ENCODE measurements at regions of chr1 and their contacts with region 1.

Region 1: DNA sequence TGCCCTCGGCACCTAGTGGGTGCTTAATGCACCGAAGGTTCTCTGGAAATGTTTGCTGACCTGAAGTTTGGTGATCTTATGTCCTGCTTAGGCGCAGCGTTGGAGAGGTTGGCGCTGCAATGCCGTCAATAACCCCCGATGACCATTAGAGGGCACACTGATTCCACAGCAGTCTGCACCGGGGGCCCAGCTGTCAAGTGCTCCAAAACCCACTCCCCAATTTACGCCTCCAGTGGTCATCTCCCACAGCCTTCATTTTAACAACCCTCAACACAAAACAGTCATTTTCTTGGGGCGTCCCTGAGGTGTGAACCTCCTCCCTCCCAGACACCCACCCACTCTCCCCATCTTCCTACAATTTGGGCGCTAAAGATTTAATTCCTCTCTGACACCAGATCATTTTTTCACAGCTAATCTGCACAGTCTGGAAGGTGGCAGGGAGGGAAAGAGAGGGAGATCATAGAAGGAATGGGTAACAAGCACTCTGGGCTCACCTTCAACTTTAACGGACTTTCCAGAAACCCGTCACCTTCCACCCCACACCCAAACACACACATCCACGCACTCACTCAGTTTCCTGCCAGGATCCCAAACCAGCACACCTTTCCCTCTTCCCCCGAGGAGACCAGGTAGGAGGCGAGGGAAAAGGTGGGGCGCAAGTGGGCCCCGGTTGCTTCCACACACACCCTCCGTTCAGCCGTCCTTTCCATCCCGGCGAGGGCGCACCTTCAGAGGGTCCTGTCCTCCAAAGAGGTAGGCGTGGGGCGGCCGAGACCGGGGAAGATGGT is 576 bp upstream of the NPR1 start:
- DNase-seq: no peak
- ATAC-seq: peak; percentile 77
- H3K4me3 ChIP-seq: peak overlapping the region; percentile 67
- H3K27ac ChIP-seq: peak overlapping the region; percentile 74
- H3K4me1 ChIP-seq: peaks cover 14% of the 10 kb centered on the region
- H3K27me3 ChIP-seq: peaks cover 24% of the 10 kb centered on the region
- CTCF ChIP-seq: peak; percentile 90

Region 2: GRCh38 chr1:153749408-153750005 is 71.6 kb after region 1 on chr1:
- intact Hi-C with region 1: loop called (anchors 5 kb)
- DNase-seq: peak; percentile 91
- ATAC-seq: peak; percentile 96
- H3K4me3 ChIP-seq: no peak overlapping the region
- H3K27ac ChIP-seq: peak overlapping the region; percentile 85
- H3K4me1 ChIP-seq: peaks cover 39% of the 10 kb centered on the region
- H3K27me3 ChIP-seq: no peaks in the 10 kb centered on the region
- CTCF ChIP-seq: peak; percentile 96

Region 3: DNA sequence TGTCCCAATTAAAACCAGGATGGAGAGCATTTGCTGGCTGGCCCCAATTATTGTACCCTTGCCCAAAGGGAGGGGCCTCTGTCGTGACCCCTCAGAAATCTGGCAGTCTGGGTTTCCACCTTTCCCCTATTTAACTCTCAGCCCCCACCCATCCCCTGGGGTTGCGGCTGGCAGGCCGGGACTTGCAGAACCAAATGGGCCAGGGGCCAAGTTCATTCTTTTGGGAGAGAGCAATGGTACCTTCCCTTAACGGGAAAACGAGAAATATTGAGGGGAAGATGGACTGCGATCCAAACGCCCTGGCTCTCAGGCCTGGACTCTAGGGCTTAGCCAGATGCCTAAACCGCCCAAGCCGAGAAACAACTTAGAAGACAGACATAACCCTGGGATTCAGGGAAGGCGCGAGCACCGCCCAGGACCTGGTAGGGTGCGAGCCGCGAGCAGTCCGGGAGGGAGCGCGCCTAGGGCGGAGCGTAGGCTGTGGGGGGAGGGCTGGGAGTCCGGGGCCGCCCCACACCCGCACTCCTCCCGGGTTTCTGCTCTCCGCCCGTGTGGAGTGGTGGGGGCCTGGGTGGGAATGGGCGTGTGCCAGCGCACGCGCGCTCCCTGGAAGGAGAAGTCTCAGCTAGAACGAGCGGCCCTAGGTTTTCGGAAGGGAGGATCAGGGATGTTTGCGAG is 97.0 kb after region 1 on chr1 and contains the start of gene SLC27A3:
- intact Hi-C with region 1: loop called (anchors 5 kb)
- DNase-seq: peak; percentile 93
- ATAC-seq: peak; percentile 82
- H3K4me3 ChIP-seq: peak within 1 kb of the TSS; percentile 92
- H3K27ac ChIP-seq: peak within 1 kb of the TSS; percentile 93
- H3K4me1 ChIP-seq: peaks cover 70% of the 10 kb centered on the region
- H3K27me3 ChIP-seq: no peaks in the 10 kb centered on the region
- CTCF ChIP-seq: no peak
- total RNA-seq, gene SLC27A3: 105 TPM

Region 4: GRCh38 chr1:153946622-153947241 is 268.8 kb after region 1 on chr1 and contains the start of gene DENND4B:
- intact Hi-C with region 1: no loop called
- DNase-seq: peak; percentile 94
- ATAC-seq: peak; percentile 88
- H3K4me3 ChIP-seq: peak within 1 kb of the TSS; percentile 78
- H3K27ac ChIP-seq: peak within 1 kb of the TSS; percentile 95
- H3K4me1 ChIP-seq: peaks cover 23% of the 10 kb centered on the region
- H3K27me3 ChIP-seq: no peaks in the 10 kb centered on the region
- CTCF ChIP-seq: peak; percentile 94
- total RNA-seq, gene DENND4B: 83.7 TPM

Region 5: DNA sequence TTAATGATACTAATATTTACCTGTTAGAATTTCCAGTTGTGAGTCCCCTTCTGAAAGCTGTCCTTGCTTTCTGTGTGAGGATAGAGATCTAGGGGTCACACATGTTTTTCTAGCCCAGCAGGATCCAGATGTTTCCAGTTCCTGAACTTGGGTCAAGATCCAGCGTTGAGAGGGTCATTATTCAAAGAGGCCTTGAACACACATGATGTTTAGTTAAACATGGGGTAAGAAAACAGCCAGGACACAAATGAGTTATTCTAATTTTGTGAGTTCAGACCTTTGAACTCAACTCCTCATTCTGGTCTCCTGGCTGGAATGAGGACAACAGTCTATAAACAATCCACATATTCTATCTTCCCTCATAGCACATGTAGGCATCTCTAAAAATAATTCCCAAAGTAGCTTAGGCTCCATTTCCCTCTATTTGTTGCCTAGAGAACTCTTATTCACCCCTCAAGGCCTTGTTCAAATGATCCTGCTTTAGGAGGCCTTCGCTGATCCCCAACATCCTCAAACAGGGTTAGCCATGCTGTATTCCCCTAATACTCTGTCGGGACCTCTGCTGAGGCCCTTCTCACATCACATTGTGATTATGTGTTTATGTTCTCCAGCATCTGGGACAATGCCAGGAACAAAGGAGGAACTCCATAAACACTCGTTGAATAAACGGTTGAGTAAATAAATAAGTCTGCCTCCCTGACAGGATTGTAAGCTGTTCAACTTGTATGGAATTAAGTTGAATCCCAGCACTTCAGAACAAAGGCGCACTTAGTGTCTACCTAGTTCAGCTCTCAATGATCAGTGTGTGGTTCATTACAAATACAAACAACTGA is 1207.2 kb after region 1 on chr1:
- intact Hi-C with region 1: no loop called
- DNase-seq: no peak
- ATAC-seq: no peak
- H3K4me3 ChIP-seq: no peak overlapping the region
- H3K27ac ChIP-seq: no peak overlapping the region
- H3K4me1 ChIP-seq: no peaks in the 10 kb centered on the region
- H3K27me3 ChIP-seq: no peaks in the 10 kb centered on the region
- CTCF ChIP-seq: no peak

Measured in upper lobe of right lung (tissue), 1 donor.